Right lobe of liver (tissue), 6 donors: ENCODE measurements at regions of chr5 and their contacts with region 1.

Region 1: DNA sequence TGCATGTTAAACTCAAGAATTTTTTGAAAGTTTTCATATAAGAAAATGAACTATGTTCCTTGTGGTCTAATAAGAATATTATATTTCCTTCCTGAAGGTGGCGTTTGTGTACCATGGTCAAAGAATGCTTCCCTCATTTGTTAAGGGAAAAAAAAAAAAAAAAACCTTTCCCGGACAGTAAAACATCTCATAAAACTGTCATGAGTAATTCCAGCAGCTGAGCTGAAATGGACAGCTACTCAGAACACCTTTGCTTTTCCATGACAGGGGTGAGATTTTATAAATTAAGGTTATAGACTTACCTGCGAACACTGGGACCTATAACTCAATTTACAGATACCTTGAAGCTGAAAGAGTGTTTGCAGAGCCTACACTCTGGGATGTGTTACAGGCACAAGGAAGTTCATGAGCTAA is 113.2 kb upstream of the RANBP3L start:
- DNase-seq: no peak
- ATAC-seq: peak; percentile 42 to 64 (median 55)
- H3K4me3 ChIP-seq: no peak overlapping the region
- H3K27ac ChIP-seq: no peak overlapping the region
- H3K4me1 ChIP-seq: peaks cover 0 to 22% (median 8%) of the 10 kb centered on the region in 4 donors
- H3K27me3 ChIP-seq: no peaks in the 10 kb centered on the region
- CTCF ChIP-seq: peak; percentile 41 to 55 (median 48)
- POLR2A ChIP-seq: no peak

Region 2: DNA sequence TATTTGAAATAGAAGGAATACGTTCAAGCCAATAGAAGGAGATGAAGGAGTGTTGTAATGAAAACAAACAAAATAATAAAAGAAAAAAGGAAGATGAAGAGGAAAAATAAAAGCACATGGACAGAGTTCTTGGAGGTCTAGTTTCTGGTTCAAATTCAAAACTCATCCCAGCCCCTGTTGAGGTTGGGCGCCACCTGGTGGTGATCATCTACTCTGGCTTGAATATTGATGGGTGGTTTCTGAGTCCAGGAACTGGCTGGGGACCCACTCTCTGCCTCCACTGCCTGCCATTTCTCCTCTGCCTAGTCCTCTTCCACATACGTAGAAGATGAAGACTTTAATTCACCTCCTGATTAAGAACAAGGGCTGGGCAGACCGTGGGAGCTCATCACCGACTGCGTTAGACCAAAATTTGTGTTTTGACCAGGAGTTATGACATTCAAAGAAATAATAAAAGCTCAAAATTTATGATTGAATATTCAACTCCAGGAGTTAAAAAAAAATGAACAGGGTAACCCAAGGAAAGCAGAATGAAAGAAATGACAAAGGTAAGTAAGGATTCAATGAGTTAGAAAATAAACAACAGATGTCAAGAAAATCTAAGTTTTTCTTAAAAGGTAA is 92.6 kb after region 1 on chr5:
- intact Hi-C with region 1: loop called in 1 of 2 experiments (anchors 5 kb)
- DNase-seq: peak; percentile 63 to 81 (median 80)
- ATAC-seq: peak; percentile 92 to 94 (median 94)
- H3K4me3 ChIP-seq: no peak overlapping the region
- H3K27ac ChIP-seq: no peak overlapping the region
- H3K4me1 ChIP-seq: no peaks in the 10 kb centered on the region
- H3K27me3 ChIP-seq: no peaks in the 10 kb centered on the region
- CTCF ChIP-seq: peak; percentile 77 to 91 (median 88)
- POLR2A ChIP-seq: no peak

Region 3: GRCh38 chr5:36690041-36690961 is 275.4 kb after region 1 on chr5:
- intact Hi-C with region 1: loop called (anchors 5 to 10 kb)
- DNase-seq: peak; percentile 76 to 86 (median 83)
- ATAC-seq: peak; percentile 86 to 90 (median 88)
- H3K4me3 ChIP-seq: peak overlapping the region; percentile 41 to 54 (median 41)
- H3K27ac ChIP-seq: peak overlapping the region in 1 of 3 donors; percentile 47
- H3K4me1 ChIP-seq: peaks cover 0 to 10% (median 0%) of the 10 kb centered on the region in 4 donors
- H3K27me3 ChIP-seq: no peaks in the 10 kb centered on the region
- CTCF ChIP-seq: peak; percentile 69 to 84 (median 80)
- POLR2A ChIP-seq: no peak